Activated CD4-positive, alpha-beta T cell treated with anti-CD3 and anti-CD28 coated beads for 36 hours (primary cell): ENCODE measurements at regions of chr5 and their contacts with region 1.

Region 1: GRCh38 chr5:139392678-139393496 is 2.0 kb downstream of the PROB1 start:
- DNase-seq: peak; percentile 93
- ATAC-seq: peak; percentile 67
- H3K4me3 Mint-ChIP-seq: peak overlapping the region; percentile 78
- H3K27ac Mint-ChIP-seq: peak overlapping the region; percentile 85
- H3K4me1 Mint-ChIP-seq: peaks cover 40% of the 10 kb centered on the region
- H3K27me3 Mint-ChIP-seq: no peaks in the 10 kb centered on the region

Region 2: GRCh38 chr5:139197710-139198669 is 194.9 kb before region 1 on chr5 and contains the start of gene SIL1:
- CTCF ChIA-PET with region 1: no interaction called
- POLR2A ChIA-PET with region 1: no interaction called
- intact Hi-C with region 1: loop called (anchors 2 to 10 kb)
- DNase-seq: peak; percentile 98
- ATAC-seq: peak; percentile 100
- H3K4me3 Mint-ChIP-seq: peak within 1 kb of the TSS; percentile 90
- H3K27ac Mint-ChIP-seq: peak within 1 kb of the TSS; percentile 97
- H3K4me1 Mint-ChIP-seq: peaks cover 18% of the 10 kb centered on the region
- H3K27me3 Mint-ChIP-seq: peaks cover 2% of the 10 kb centered on the region
- total RNA-seq, gene SIL1: 11.2 to 14.4 TPM

Region 3: GRCh38 chr5:139273572-139274289 is 119.2 kb before region 1 on chr5:
- CTCF ChIA-PET with region 1: no interaction called
- POLR2A ChIA-PET with region 1: interaction called, 3 read pairs
- intact Hi-C with region 1: loop called (anchors 1 to 5 kb)
- DNase-seq: peak; percentile 95
- ATAC-seq: peak; percentile 90
- H3K4me3 Mint-ChIP-seq: peak overlapping the region; percentile 95
- H3K27ac Mint-ChIP-seq: peak overlapping the region; percentile 88
- H3K4me1 Mint-ChIP-seq: peaks cover 54% of the 10 kb centered on the region
- H3K27me3 Mint-ChIP-seq: no peaks in the 10 kb centered on the region

Region 4: GRCh38 chr5:139341650-139342422 is 51.1 kb before region 1 on chr5 and contains the start of gene PAIP2:
- CTCF ChIA-PET with region 1: interaction called, 5 read pairs
- POLR2A ChIA-PET with region 1: interaction called, 4 read pairs
- intact Hi-C with region 1: loop called (anchors 1 kb)
- DNase-seq: peak; percentile 99
- ATAC-seq: peak; percentile 88
- H3K4me3 Mint-ChIP-seq: peak within 1 kb of the TSS; percentile 88
- H3K27ac Mint-ChIP-seq: peak within 1 kb of the TSS; percentile 94
- H3K4me1 Mint-ChIP-seq: peaks cover 53% of the 10 kb centered on the region
- H3K27me3 Mint-ChIP-seq: no peaks in the 10 kb centered on the region
- total RNA-seq, gene PAIP2: 101 to 126 TPM

Region 5: DNA sequence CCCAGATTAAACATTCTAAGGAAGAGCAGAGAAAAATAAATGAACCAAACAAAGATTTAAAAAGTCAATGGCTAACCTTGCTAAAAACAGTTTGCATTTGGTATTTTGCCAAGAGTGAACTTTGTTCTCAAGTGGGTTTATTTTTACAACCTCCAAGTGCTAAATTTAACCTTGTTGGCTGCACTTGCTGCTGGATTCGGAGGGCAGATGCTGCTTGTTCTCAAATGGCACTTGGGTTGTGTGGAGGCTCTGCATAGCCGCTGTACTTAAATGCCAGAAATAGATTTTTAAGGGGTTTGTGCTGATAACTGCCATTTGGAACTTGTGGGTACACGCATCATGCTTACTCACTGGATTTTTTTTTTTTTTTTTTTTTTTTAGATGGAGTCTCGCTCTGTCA is 24.3 kb after region 1 on chr5:
- CTCF ChIA-PET with region 1: interaction called, 5 read pairs
- POLR2A ChIA-PET with region 1: interaction called, 5 read pairs
- intact Hi-C with region 1: loop called in 1 of 2 experiments (anchors 1 kb)
- DNase-seq: no peak
- ATAC-seq: no peak
- H3K4me3 Mint-ChIP-seq: no peak overlapping the region
- H3K27ac Mint-ChIP-seq: peak overlapping the region; percentile 98
- H3K4me1 Mint-ChIP-seq: peaks cover 50% of the 10 kb centered on the region
- H3K27me3 Mint-ChIP-seq: no peaks in the 10 kb centered on the region

Region 6: GRCh38 chr5:139745800-139746690 is 353.2 kb after region 1 on chr5:
- CTCF ChIA-PET with region 1: no interaction called
- POLR2A ChIA-PET with region 1: no interaction called
- intact Hi-C with region 1: loop called in 1 of 2 experiments (anchors 5 kb)
- DNase-seq: peak; percentile 70
- ATAC-seq: peak; percentile 27
- H3K4me3 Mint-ChIP-seq: peak overlapping the region; percentile 60
- H3K27ac Mint-ChIP-seq: no peak overlapping the region
- H3K4me1 Mint-ChIP-seq: peaks cover 29% of the 10 kb centered on the region
- H3K27me3 Mint-ChIP-seq: peaks cover 16% of the 10 kb centered on the region